K562 (cell line): ENCODE measurements at regions of chr9 and their contacts with region 1.

Region 1: GRCh38 chr9:38451162-38451561 is 26.9 kb upstream of the IGFBPL1 start:
- DNase-seq: no peak
- ATAC-seq: no peak
- H3K4me3 ChIP-seq: no peak overlapping the region
- H3K27ac ChIP-seq: no peak overlapping the region
- H3K4me1 ChIP-seq: no peaks in the 10 kb centered on the region
- H3K27me3 ChIP-seq: no peaks in the 10 kb centered on the region
- CTCF ChIP-seq: no peak
- EP300 ChIP-seq: no peak
- POLR2A ChIP-seq: no peak
- RAD21 ChIP-seq: no peak

Region 2: GRCh38 chr9:38417003-38417945 is 33.9 kb before region 1 on chr9:
- CTCF ChIA-PET with region 1: no interaction called
- POLR2A ChIA-PET with region 1: interaction called, 3 read pairs
- in situ Hi-C with region 1: no loop called
- intact Hi-C with region 1: loop called (anchors 5 kb)
- DNase-seq: peak; percentile 68 to 79 (median 74)
- ATAC-seq: peak; percentile 92
- H3K4me3 ChIP-seq: no peak overlapping the region
- H3K27ac ChIP-seq: no peak overlapping the region
- H3K4me1 ChIP-seq: no peaks in the 10 kb centered on the region
- H3K27me3 ChIP-seq: peaks cover 47 to 64% of the 10 kb centered on the region in 2 experiments
- CTCF ChIP-seq: peak; percentile 79 to 95 (median 84)
- EP300 ChIP-seq: no peak
- POLR2A ChIP-seq: no peak
- RAD21 ChIP-seq: peak; percentile 31 to 57; a peak in 3 of 4 replicates